SK-N-SH (cell line): ENCODE measurements at regions of chr19 and their contacts with region 1.

Region 1: DNA sequence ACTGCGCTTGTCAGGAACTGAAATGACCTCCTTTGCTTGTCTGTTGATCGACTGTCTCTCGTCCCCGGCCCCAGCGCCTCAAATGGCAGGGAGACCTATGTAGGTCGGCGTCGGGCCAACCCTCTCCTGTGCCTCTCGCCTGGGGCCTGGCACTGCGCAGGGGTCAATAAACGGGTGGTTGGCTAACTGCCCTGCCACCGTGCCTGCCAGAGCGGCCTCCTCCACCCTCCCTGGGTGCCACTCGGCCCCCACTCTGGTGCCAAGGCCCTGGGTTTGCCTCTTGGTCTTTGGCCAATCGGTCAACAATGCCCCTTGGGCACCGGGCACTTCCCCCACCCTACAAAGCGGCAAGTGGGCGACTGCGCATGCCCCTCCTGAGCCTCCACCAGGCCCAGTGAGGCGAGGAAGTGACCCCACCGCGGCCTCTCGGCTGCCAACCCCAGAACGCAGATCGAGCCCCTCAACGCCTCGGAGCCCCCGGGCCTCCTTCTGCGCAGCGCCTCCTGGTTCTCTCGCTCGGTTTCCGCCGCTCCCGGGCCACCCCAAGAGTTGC is 1.1 kb downstream of the KEAP1 start:
- DNase-seq: peak; percentile 90
- H3K4me3 ChIP-seq: peak overlapping the region; percentile 66 to 88
- H3K27ac ChIP-seq: peak overlapping the region; percentile 92 to 94
- H3K4me1 ChIP-seq: peaks cover 3 to 4% of the 10 kb centered on the region in 2 experiments; a peak in 1 of 4 replicates
- H3K27me3 ChIP-seq: no peaks in the 10 kb centered on the region
- CTCF ChIP-seq: 0 out of 2 replicates have a peak, but pooled peaks have one; percentile 18
- EP300 ChIP-seq: no peak
- RAD21 ChIP-seq: no peak

Region 2: DNA sequence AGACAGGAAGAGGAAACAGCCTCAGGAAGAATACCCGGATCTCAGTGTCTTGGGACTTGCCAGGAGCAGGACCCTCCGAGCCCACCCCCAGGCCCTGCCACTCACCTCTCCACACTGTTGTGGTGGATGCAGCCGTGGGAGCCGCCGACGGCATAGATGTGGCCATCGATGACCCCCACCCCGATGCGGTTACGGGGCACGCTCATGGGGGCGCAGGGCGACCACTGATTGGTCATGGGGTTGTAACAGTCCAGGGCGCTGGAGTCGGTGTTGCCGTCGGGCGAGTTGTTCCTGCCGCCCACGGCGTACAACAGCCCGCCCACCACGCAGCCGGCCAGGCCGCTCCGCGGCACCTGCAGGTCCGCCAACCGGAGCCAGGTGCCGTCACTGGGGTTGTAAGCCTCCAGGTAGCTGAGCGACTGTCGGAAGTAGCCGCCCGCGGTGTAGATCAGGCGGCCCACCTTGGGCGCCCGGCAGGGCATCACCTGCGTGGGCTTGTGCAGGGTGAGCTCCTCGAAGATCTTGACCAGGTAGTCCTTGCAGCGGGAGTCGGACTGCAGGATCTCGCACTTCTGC is 10.5 kb before region 1 on chr19:
- CTCF ChIA-PET with region 1: interaction called, 10 read pairs
- POLR2A ChIA-PET with region 1: no interaction called
- DNase-seq: no peak
- H3K4me3 ChIP-seq: no peak overlapping the region; a peak in 1 of 4 replicates
- H3K27ac ChIP-seq: no peak overlapping the region
- H3K4me1 ChIP-seq: no peaks in the 10 kb centered on the region
- H3K27me3 ChIP-seq: no peaks in the 10 kb centered on the region
- CTCF ChIP-seq: no peak
- EP300 ChIP-seq: no peak
- RAD21 ChIP-seq: no peak